Posterior cingulate gyrus (tissue), 11 donors: ENCODE measurements at regions of chr7 and their contacts with region 1.

Region 1: DNA sequence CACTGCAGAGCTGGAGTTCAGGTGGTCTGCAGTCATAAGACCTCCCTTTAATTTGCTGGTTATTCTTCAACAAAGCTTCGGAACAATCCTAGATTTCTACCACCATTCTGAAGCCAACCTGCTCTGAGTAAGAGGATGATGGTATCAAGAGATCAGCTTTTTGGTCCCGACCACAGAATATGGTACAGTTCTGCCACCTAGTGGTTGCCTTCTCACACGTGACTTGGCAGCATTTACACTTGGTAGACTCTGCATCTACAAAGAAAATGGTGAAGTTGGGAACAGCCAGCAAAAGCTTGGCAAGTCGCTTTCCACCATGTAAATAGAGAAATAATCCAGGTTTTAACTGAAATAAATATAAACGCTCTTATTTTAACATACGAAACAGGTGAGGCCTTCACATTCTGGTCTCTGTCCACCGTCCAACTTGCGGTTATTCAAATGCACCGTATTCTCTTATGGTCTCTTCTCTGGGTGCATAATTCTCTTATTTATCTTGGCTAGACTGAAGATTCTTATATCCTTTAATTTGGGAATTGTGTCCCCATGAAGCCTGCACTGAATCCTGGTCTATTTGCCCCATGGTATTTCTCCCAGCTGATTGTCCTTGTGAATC is 173.9 kb upstream of the GRM3 start:
- DNase-seq: peak in 9 of 10 donors; percentile 17 to 88 (median 62)

Region 2: GRCh38 chr7:85890244-85890811 is 579.5 kb before region 1 on chr7:
- intact Hi-C with region 1: loop called (anchors 2 kb)
- DNase-seq: no peak

Region 3: GRCh38 chr7:85997515-85997914 is 472.3 kb before region 1 on chr7:
- intact Hi-C with region 1: no loop called
- DNase-seq: no peak

Region 4: GRCh38 chr7:86257894-86258293 is 211.9 kb before region 1 on chr7:
- intact Hi-C with region 1: no loop called
- DNase-seq: no peak

Region 5: GRCh38 chr7:86653919-86654659 is 184.3 kb after region 1 on chr7:
- intact Hi-C with region 1: no loop called
- DNase-seq: peak in 9 of 10 donors; percentile 32 to 90 (median 46)